Sciatic nerve (tissue), 2 donors: ENCODE measurements at regions of chr4 and their contacts with region 1.

Region 1: GRCh38 chr4:109798866-109799265 is 2.9 kb downstream of the CFI start:
- DNase-seq: no peak
- ATAC-seq: no peak

Region 2: GRCh38 chr4:108620101-108620932 is 1178.5 kb before region 1 on chr4 and contains the start of gene RPL34:
- intact Hi-C with region 1: loop called (anchors 5 kb)
- DNase-seq: peak; percentile 98
- ATAC-seq: peak; percentile 100
- total RNA-seq, gene RPL34: 980 TPM